ENCODE measurements at regions of chr20 and their contacts with region 1.

Region 1: GRCh38 chr20:37564388-37565133 is 36.9 kb upstream of the BLCAP start:
- DNase-seq: peak in 4 of 5 donors; percentile 21 to 71 (median 43)
- H3K4me3 ChIP-seq: no peak overlapping the region
- H3K27ac ChIP-seq: no peak overlapping the region
- H3K4me1 ChIP-seq: no peaks in the 10 kb centered on the region
- H3K27me3 ChIP-seq: no peaks in the 10 kb centered on the region
- CTCF ChIP-seq: peak; percentile 56 to 67 (median 63)
- EP300 ChIP-seq: no peak
- POLR2A ChIP-seq: no peak

Region 2: DNA sequence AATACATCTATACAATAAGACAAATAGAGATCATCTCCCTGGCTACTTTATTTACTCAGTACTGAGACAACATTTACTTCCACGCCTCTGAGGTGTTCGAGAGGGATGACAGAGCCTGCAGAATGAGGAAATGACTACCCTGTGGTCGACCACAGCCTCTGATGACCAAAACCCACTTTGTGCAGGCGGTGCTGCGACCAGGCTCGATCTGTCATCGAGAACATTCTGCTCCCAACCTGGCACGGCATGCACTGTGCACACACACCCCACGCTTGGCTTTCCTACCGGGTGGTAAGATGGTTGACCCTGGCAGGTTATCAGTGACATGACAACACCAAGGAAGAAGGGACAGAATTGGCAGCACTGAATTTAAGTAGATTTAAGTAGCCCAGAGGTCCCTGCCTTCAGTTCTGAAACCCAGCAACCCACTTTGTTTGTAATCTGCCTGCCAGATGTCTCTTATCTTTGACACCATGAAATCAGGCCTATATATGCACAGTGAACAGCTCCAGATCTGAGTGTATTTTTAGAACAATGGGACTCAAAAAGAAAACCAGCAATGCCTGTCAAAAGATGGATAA is 426.1 kb after region 1 on chr20:
- intact Hi-C with region 1: loop called in 3 of 4 experiments (anchors 10 kb)
- DNase-seq: no peak
- H3K4me3 ChIP-seq: no peak overlapping the region
- H3K27ac ChIP-seq: no peak overlapping the region
- H3K4me1 ChIP-seq: peaks cover 4% of the 10 kb centered on the region
- H3K27me3 ChIP-seq: no peaks in the 10 kb centered on the region
- CTCF ChIP-seq: no peak
- EP300 ChIP-seq: no peak
- POLR2A ChIP-seq: no peak

Region 3: GRCh38 chr20:38406476-38406875 is 841.9 kb after region 1 on chr20:
- intact Hi-C with region 1: loop called in 1 of 4 experiments (anchors 10 kb)
- DNase-seq: no peak
- H3K4me3 ChIP-seq: no peak overlapping the region
- H3K27ac ChIP-seq: no peak overlapping the region
- H3K4me1 ChIP-seq: peaks cover 1% of the 10 kb centered on the region
- H3K27me3 ChIP-seq: no peaks in the 10 kb centered on the region
- CTCF ChIP-seq: no peak
- EP300 ChIP-seq: no peak
- POLR2A ChIP-seq: no peak